ENCODE measurements at regions of chr17 and their contacts with region 1.

Region 1: DNA sequence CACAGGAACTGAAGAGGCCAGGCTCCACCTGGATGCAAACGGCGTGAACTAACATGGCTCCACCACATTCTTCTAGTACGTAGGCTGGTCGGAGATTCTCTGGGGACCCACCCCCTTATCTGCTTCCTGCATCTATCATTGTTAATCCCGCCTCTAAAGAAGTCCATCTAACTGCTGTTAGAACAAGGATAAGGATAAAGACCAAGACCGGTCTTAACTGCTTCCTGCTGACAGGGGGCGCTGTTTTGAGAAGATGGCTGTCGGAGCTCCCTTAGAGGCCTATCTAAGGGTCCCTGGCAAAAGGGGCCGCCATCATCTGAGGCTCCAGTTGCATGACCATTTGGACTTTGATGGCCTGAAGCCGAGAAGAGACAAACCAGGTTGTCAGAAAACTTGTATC is 25.8 kb upstream of the TNFSF12 start:
- DNase-seq: peak; percentile 43
- ATAC-seq: peak; percentile 70
- H3K4me3 ChIP-seq: no peak overlapping the region
- H3K27ac ChIP-seq: no peak overlapping the region
- H3K4me1 ChIP-seq: no peaks in the 10 kb centered on the region
- H3K27me3 ChIP-seq: peaks cover 0 to 1% of the 10 kb centered on the region in 2 experiments; a peak in 1 of 5 replicates
- CTCF ChIP-seq: peak; percentile 62
- EP300 ChIP-seq: no peak
- POLR2A ChIP-seq: no peak
- RAD21 ChIP-seq: no peak

Region 2: GRCh38 chr17:7538891-7539290 is 15.9 kb after region 1 on chr17:
- CTCF ChIA-PET with region 1: no interaction called
- POLR2A ChIA-PET with region 1: no interaction called
- in situ Hi-C with region 1: no loop called
- intact Hi-C with region 1: loop called (anchors 2 kb)
- DNase-seq: no peak
- ATAC-seq: no peak
- H3K4me3 ChIP-seq: no peak overlapping the region
- H3K27ac ChIP-seq: no peak overlapping the region
- H3K4me1 ChIP-seq: peaks cover 49% of the 10 kb centered on the region
- H3K27me3 ChIP-seq: peaks cover 0 to 7% of the 10 kb centered on the region in 2 experiments; a peak in 3 of 5 replicates
- CTCF ChIP-seq: no peak
- EP300 ChIP-seq: no peak
- POLR2A ChIP-seq: no peak
- RAD21 ChIP-seq: no peak

Region 3: DNA sequence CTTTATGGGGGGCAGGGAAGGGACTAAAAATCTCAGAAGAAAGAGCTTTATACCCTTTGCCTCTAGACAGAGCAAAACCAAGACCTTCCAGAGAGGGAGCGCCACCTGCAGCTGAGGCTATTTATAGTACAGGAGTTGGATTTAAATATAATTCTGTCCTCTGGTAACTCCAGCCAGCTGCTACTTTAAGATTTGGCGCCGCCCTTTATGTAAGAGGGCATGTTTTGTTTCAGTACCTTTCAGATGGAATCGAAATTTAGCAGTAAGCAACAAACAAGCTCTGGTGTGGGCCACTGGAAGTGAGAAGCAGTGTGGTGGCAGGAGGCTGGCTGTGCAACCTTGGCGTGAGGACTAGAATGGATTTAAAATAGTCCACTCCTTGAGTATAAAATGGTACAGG is 474.2 kb after region 1 on chr17:
- CTCF ChIA-PET with region 1: no interaction called
- POLR2A ChIA-PET with region 1: no interaction called
- in situ Hi-C with region 1: no loop called
- intact Hi-C with region 1: no loop called
- DNase-seq: peak; percentile 25
- ATAC-seq: peak; percentile 75
- H3K4me3 ChIP-seq: no peak overlapping the region
- H3K27ac ChIP-seq: no peak overlapping the region
- H3K4me1 ChIP-seq: peaks cover 4% of the 10 kb centered on the region
- H3K27me3 ChIP-seq: peaks cover 0 to 16% of the 10 kb centered on the region in 2 experiments; a peak in 2 of 5 replicates
- CTCF ChIP-seq: peak; percentile 52
- EP300 ChIP-seq: no peak
- POLR2A ChIP-seq: no peak
- RAD21 ChIP-seq: no peak